Calu3 (cell line): ENCODE measurements at regions of chr18 and their contacts with region 1.

Region 1: GRCh38 chr18:44589693-44590355 is 90.9 kb upstream of the SETBP1 start:
- DNase-seq: peak; percentile 13
- H3K4me3 Mint-ChIP-seq: no peak overlapping the region
- H3K27ac Mint-ChIP-seq: no peak overlapping the region
- H3K4me1 Mint-ChIP-seq: peaks cover 26% of the 10 kb centered on the region
- H3K27me3 Mint-ChIP-seq: no peaks in the 10 kb centered on the region
- CTCF ChIP-seq: no peak

Region 2: DNA sequence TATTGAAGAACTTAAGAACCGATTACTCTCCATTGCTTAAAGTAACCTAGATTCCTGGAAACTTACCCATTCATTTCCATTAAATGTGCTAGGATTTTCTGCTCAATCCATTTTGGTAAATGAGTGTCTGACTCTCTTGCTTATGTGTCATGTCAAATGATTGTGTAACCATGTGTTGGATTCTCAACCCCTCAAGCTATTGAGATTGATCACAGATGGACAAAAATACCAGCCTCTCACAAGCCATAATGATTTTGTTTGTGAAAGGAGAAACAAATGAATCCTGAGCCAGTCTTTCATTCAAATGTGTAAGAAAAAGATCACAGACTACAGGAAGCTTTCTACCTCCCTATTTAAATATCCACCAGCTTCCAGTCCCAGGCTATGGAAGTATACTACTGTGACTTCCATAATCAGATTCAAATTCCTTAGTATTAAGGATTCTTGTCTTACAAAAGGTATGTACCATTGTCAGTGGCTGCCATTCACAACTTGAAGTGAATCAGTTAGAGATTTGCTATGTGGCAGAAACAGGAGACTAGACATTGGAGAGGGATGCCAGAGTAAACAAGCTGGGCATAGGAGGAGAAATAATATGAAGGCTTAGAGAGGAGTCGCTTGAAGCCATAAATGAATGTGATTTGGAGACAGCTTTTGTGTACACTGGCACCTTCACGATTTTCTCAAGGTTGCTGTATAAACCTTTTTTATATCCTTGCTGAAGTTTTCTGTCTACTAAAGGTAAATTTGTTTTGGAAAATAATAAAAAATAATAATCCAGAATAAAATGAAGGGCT is 407.7 kb before region 1 on chr18:
- CTCF ChIA-PET with region 1: no interaction called
- intact Hi-C with region 1: no loop called
- DNase-seq: no peak
- H3K4me3 Mint-ChIP-seq: no peak overlapping the region
- H3K27ac Mint-ChIP-seq: no peak overlapping the region
- H3K4me1 Mint-ChIP-seq: peaks cover 13% of the 10 kb centered on the region
- H3K27me3 Mint-ChIP-seq: no peaks in the 10 kb centered on the region
- CTCF ChIP-seq: no peak

Region 3: DNA sequence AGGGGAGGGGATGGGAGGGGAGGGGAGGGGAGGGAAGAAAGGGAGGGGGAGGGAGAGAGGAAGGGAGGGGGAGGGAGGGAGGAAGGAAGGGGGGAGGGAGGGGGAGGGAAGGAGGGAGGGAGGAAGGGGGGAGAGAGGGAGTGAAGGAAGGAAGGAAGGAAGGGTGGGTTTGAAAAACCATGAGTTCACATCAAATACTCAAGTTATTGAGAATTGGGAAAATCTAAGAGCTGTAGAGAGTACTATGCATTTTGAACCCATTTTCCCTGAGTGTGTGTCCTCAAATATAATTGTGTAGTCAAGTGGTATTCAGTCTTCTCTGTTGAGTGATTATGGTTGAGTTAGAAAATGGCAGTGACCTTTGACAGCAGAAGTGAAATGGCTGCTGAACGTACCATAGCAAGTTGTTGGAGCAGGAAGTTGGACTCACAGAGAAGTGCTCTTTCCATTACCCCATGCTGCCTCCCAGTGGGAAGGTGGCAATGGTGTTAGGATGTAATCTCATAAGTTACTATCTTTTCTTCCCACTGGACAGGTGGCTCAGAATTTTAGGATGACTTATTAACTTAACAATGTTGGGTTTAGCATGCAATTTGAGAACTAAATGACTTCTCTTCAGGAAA is 305.5 kb after region 1 on chr18:
- CTCF ChIA-PET with region 1: interaction called, 4 read pairs
- intact Hi-C with region 1: loop called (anchors 10 kb)
- DNase-seq: peak; percentile 61
- H3K4me3 Mint-ChIP-seq: no peak overlapping the region
- H3K27ac Mint-ChIP-seq: no peak overlapping the region
- H3K4me1 Mint-ChIP-seq: peaks cover 9% of the 10 kb centered on the region
- H3K27me3 Mint-ChIP-seq: no peaks in the 10 kb centered on the region
- CTCF ChIP-seq: no peak